A549 (cell line): ENCODE measurements at regions of chr7 and their contacts with region 1.

Region 1: DNA sequence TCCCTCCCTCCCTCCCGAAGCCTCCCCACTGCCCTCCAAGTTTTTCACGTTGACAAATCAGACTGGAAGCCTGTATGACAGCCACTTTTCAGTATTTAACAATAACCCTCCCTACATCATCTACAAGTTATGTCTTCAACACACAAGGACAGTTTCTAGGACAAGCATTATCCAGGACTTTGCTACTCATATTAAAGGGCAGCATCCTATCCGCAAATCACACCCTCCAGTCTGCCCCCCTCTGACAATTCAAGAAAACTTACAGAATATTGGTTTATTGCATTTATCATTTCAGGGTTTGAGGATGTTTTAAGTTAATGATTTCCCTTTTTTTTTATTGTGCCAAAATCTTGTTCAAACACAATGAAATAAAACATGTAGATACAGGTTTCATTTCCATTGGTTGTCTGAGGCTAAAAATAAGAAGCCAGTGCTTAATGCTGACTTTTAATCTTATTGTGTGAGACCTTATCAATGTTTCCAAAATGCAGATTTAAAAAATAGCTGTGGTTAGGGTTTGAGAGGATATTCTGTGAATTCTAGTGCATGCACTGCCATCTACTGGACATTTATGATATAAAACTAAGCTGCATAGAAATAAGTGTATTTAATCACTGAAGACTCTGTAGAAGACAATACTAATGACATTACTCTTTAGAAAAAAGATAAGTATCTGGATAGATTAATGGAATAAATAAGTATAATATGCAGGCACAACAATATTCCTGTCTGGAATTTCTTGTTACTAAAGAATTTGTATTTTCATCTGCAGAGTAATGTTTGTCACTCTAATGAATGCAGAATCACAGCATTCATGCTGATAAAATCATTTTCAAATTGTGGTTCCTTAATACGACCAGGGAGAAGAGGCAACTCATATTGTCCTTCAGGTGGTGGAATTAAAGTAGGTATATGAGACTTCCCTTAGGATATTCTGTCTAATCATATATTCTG is 64.1 kb downstream of the CAV1 start:
- DNase-seq: peak; percentile 29 to 63
- ATAC-seq: peak; percentile 69 to 73; a peak in 4 of 6 replicates
- H3K4me3 ChIP-seq: no peak overlapping the region
- H3K27ac ChIP-seq: peak overlapping the region; percentile 69 to 80
- H3K4me1 ChIP-seq: peaks cover 34% of the 10 kb centered on the region
- CTCF ChIP-seq: peak; percentile 94
- EP300 ChIP-seq: no peak
- POLR2A ChIP-seq: no peak
- RAD21 ChIP-seq: peak; percentile 97 to 98

Region 2: GRCh38 chr7:115812794-115813193 is 776.1 kb before region 1 on chr7:
- CTCF ChIA-PET with region 1: no interaction called
- POLR2A ChIA-PET with region 1: no interaction called
- DNase-seq: no peak
- ATAC-seq: no peak
- H3K4me3 ChIP-seq: no peak overlapping the region
- H3K27ac ChIP-seq: no peak overlapping the region
- H3K4me1 ChIP-seq: no peaks in the 10 kb centered on the region
- CTCF ChIP-seq: no peak
- EP300 ChIP-seq: no peak
- POLR2A ChIP-seq: no peak
- RAD21 ChIP-seq: no peak

Region 3: GRCh38 chr7:116173051-116174028 is 415.6 kb before region 1 on chr7:
- CTCF ChIA-PET with region 1: interaction called, 19 read pairs
- POLR2A ChIA-PET with region 1: no interaction called
- DNase-seq: peak; percentile 21 to 73
- ATAC-seq: peak; percentile 16 to 50; a peak in 3 of 6 replicates
- H3K4me3 ChIP-seq: no peak overlapping the region
- H3K27ac ChIP-seq: peak overlapping the region in 1 of 2 experiments; percentile 36; a peak in 1 of 6 replicates
- H3K4me1 ChIP-seq: peaks cover 56% of the 10 kb centered on the region
- CTCF ChIP-seq: peak; percentile 86
- EP300 ChIP-seq: no peak
- POLR2A ChIP-seq: no peak
- RAD21 ChIP-seq: peak; percentile 92

Region 4: GRCh38 chr7:116258734-116259133 is 330.2 kb before region 1 on chr7:
- CTCF ChIA-PET with region 1: interaction called, 75 read pairs
- POLR2A ChIA-PET with region 1: interaction called, 5 read pairs
- DNase-seq: peak; percentile 36 to 80
- ATAC-seq: peak in 1 of 2 experiments; percentile 39; a peak in 3 of 6 replicates
- H3K4me3 ChIP-seq: no peak overlapping the region
- H3K27ac ChIP-seq: peak overlapping the region; percentile 73 to 88
- H3K4me1 ChIP-seq: peaks cover 32% of the 10 kb centered on the region
- CTCF ChIP-seq: peak; percentile 94
- EP300 ChIP-seq: no peak
- POLR2A ChIP-seq: no peak
- RAD21 ChIP-seq: peak; percentile 99

Region 5: GRCh38 chr7:116616555-116617059 is 27.7 kb after region 1 on chr7:
- CTCF ChIA-PET with region 1: interaction called, 19 read pairs
- POLR2A ChIA-PET with region 1: no interaction called
- DNase-seq: peak in 1 of 2 experiments; percentile 50
- ATAC-seq: peak; percentile 31 to 64; a peak in 3 of 6 replicates
- H3K4me3 ChIP-seq: no peak overlapping the region
- H3K27ac ChIP-seq: peak overlapping the region; percentile 69 to 78
- H3K4me1 ChIP-seq: peaks cover 48% of the 10 kb centered on the region
- CTCF ChIP-seq: no peak
- EP300 ChIP-seq: no peak
- POLR2A ChIP-seq: no peak
- RAD21 ChIP-seq: no peak

Region 6: DNA sequence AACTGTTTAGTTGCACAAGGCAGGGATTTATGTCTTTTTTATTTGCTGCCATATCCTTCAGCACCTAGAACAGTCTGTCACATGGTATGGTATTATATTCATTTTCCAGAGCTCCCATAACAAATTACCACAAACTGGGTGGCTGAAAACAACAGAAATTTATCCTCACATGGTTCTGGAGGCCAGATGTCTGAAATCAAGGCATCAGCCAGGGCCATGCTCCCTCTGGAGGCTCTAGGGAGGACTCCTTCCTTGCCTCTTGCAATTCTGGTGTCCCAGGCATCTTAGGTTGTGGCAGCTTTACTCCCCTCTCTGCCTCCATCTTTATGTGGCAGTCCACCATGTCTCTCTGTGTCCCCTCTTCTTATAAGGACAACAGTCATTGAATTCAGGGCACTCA is 126.2 kb after region 1 on chr7:
- CTCF ChIA-PET with region 1: interaction called, 10 read pairs
- POLR2A ChIA-PET with region 1: no interaction called
- DNase-seq: peak in 1 of 2 experiments; percentile 51
- ATAC-seq: peak in 1 of 2 experiments; percentile 15; a peak in 1 of 6 replicates
- H3K4me3 ChIP-seq: no peak overlapping the region
- H3K27ac ChIP-seq: peak overlapping the region; percentile 77 to 86
- H3K4me1 ChIP-seq: peaks cover 72% of the 10 kb centered on the region
- CTCF ChIP-seq: no peak
- EP300 ChIP-seq: no peak
- POLR2A ChIP-seq: no peak
- RAD21 ChIP-seq: peak in 1 of 2 experiments; percentile 21; a peak in 1 of 5 replicates

Region 7: GRCh38 chr7:116809636-116810266 is 220.8 kb after region 1 on chr7:
- CTCF ChIA-PET with region 1: interaction called, 79 read pairs
- POLR2A ChIA-PET with region 1: no interaction called
- DNase-seq: peak in 1 of 2 experiments; percentile 79
- ATAC-seq: peak; percentile 84 to 86
- H3K4me3 ChIP-seq: no peak overlapping the region
- H3K27ac ChIP-seq: peak overlapping the region; percentile 67 to 68
- H3K4me1 ChIP-seq: peaks cover 77% of the 10 kb centered on the region
- CTCF ChIP-seq: peak; percentile 92
- EP300 ChIP-seq: no peak
- POLR2A ChIP-seq: no peak
- RAD21 ChIP-seq: peak; percentile 93 to 96